ENCODE measurements at regions of chr4 and their contacts with region 1.

Region 1: DNA sequence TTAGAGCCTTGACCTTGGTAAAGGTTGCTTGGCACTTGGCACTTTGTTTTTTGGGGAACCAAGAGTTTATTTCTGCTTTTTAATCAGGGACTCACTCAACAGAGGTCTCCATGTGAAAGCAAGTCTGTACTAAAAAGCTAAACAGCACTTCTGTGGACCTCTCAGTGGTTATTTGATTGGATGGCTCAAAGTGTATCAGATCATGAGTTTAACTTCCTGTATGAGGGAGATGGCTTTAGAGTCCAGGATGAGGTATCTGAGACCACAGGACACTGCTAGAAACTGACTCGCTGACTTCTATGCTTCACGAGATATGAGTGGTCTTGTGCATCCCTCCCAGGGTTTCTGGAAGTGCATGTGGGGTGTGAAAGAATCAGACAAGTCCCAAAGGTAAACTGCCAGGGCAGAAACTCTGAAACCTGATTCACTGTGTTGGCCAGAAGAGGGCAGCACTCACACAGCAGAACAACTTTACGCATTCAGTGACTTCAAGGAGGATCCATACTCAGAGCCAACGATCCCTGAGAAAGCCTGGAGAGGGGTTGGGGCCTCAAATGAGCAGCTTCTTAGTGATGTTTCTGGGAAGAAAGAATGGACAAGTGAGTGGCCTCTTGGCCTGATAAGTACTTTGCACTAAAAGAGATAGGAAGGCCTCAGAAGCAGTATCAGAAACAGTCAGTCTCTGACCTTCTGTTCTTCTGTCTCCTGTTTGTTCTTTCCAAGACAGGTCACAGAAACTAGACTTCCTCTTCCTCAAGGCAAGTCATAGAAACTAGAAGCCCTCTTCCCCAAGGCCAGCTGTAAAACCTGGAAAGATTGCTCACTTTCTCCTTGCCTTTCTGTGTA is 220.3 kb upstream of the CXCL13 start:
- DNase-seq: no peak

Region 2: DNA sequence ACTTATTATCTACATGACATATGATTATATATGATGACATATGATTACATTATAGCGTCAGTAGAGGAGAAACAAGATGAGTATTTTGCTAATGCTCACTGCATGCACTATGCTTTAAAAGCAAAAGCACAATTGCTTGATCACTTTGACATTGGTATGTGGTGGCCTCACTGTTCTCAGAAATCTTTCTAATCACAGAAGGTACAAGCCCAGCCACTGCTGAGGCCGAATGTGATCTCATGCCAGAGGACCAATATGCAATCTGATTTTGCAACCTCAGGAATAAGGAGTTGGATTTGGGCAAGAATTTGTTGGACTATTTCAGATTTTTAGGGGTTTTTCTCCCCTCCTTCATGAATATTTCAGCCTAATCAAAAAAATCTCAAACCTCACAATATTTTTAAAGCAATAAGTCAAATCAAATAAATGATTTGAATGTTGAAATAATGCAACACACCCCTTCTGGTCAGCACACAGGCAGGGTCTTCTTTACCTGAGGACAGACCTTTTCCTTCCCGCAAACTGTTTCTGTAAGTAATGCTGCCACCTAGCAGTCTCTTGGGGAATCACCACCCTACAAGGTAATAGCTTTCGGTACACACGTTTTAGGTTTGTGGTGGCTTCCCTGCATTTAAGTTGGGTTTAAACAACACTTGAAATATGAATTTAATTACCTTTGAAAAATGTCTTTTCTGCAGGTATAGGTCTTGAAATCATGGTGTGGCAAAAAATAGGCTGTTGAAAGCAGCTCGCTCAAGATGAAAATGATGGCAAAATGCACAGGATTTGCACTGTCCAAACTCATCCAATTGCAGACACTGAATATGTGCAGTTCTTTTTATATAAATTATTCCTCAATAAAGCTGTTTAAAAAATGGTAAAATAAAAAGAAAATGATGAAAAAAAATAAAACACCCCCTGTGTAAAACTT is 215.4 kb after region 1 on chr4:
- intact Hi-C with region 1: loop called in 1 of 2 experiments (anchors 5 kb)
- DNase-seq: no peak

Region 3: GRCh38 chr4:77862478-77863216 is 477.3 kb after region 1 on chr4 and contains the start of gene MRPL1:
- intact Hi-C with region 1: loop called in 1 of 2 experiments (anchors 5 kb)
- DNase-seq: peak; percentile 96
- total RNA-seq, gene MRPL1: 38.4 to 45.3 TPM